ENCODE measurements at regions of chr11 and their contacts with region 1.

Region 1: GRCh38 chr11:94786264-94787126 is 18.3 kb downstream of the AMOTL1 start:
- DNase-seq: peak; percentile 75
- ATAC-seq: no peak
- H3K4me3 ChIP-seq: no peak overlapping the region
- H3K27ac ChIP-seq: peak overlapping the region; percentile 95
- H3K4me1 ChIP-seq: peaks cover 47% of the 10 kb centered on the region
- H3K27me3 ChIP-seq: no peaks in the 10 kb centered on the region
- CTCF ChIP-seq: peak; percentile 80

Region 2: GRCh38 chr11:94767761-94768601 is 18.5 kb before region 1 on chr11 and contains the start of gene AMOTL1:
- CTCF ChIA-PET with region 1: no interaction called
- POLR2A ChIA-PET with region 1: interaction called, 3 read pairs
- intact Hi-C with region 1: loop called (anchors 1 kb)
- DNase-seq: peak; percentile 96
- ATAC-seq: peak; percentile 78
- H3K4me3 ChIP-seq: peak within 1 kb of the TSS; percentile 94
- H3K27ac ChIP-seq: peak within 1 kb of the TSS; percentile 61
- H3K4me1 ChIP-seq: peaks cover 46% of the 10 kb centered on the region
- H3K27me3 ChIP-seq: no peaks in the 10 kb centered on the region
- CTCF ChIP-seq: peak; percentile 41
- total RNA-seq, gene AMOTL1: 32.6 and 37.9 TPM in 2 replicates

Region 3: GRCh38 chr11:94845622-94846021 is 59.1 kb after region 1 on chr11:
- CTCF ChIA-PET with region 1: interaction called, 4 read pairs
- POLR2A ChIA-PET with region 1: no interaction called
- intact Hi-C with region 1: loop called (anchors 1 kb)
- DNase-seq: peak; percentile 93
- ATAC-seq: peak; percentile 100
- H3K4me3 ChIP-seq: no peak overlapping the region
- H3K27ac ChIP-seq: 0 out of 2 replicates have a peak overlapping the region, but pooled peaks have one; percentile 3
- H3K4me1 ChIP-seq: peaks cover 16% of the 10 kb centered on the region
- H3K27me3 ChIP-seq: no peaks in the 10 kb centered on the region
- CTCF ChIP-seq: no peak

Region 4: GRCh38 chr11:94876645-94877442 is 90.3 kb after region 1 on chr11:
- CTCF ChIA-PET with region 1: no interaction called
- POLR2A ChIA-PET with region 1: no interaction called
- intact Hi-C with region 1: loop called (anchors 2 kb)
- DNase-seq: peak; percentile 84
- ATAC-seq: peak; percentile 79
- H3K4me3 ChIP-seq: no peak overlapping the region
- H3K27ac ChIP-seq: peak overlapping the region; percentile 22
- H3K4me1 ChIP-seq: peaks cover 44% of the 10 kb centered on the region
- H3K27me3 ChIP-seq: no peaks in the 10 kb centered on the region
- CTCF ChIP-seq: peak; percentile 58

Region 5: GRCh38 chr11:94885133-94885532 is 98.6 kb after region 1 on chr11:
- CTCF ChIA-PET with region 1: interaction called, 5 read pairs
- POLR2A ChIA-PET with region 1: interaction called, 13 read pairs
- intact Hi-C with region 1: loop called (anchors 2 kb)
- DNase-seq: peak; percentile 96
- ATAC-seq: peak; percentile 83
- H3K4me3 ChIP-seq: no peak overlapping the region
- H3K27ac ChIP-seq: peak overlapping the region; percentile 38
- H3K4me1 ChIP-seq: peaks cover 33% of the 10 kb centered on the region
- H3K27me3 ChIP-seq: no peaks in the 10 kb centered on the region
- CTCF ChIP-seq: no peak

Region 6: GRCh38 chr11:94897330-94897768 is 110.9 kb after region 1 on chr11:
- CTCF ChIA-PET with region 1: interaction called, 4 read pairs
- POLR2A ChIA-PET with region 1: no interaction called
- intact Hi-C with region 1: loop called (anchors 1 kb)
- DNase-seq: peak; percentile 78
- ATAC-seq: peak; percentile 73
- H3K4me3 ChIP-seq: no peak overlapping the region
- H3K27ac ChIP-seq: no peak overlapping the region
- H3K4me1 ChIP-seq: peaks cover 8% of the 10 kb centered on the region; the same call in 1 of the 2 replicates
- H3K27me3 ChIP-seq: no peaks in the 10 kb centered on the region
- CTCF ChIP-seq: peak; percentile 98

Region 7: GRCh38 chr11:94973099-94973968 is 186.8 kb after region 1 on chr11 and contains the starts of genes CWC15 and KDM4D:
- CTCF ChIA-PET with region 1: no interaction called
- POLR2A ChIA-PET with region 1: interaction called, 3 read pairs
- intact Hi-C with region 1: loop called (anchors 1 kb)
- DNase-seq: peak; percentile 98
- ATAC-seq: peak; percentile 99
- H3K4me3 ChIP-seq: peak within 1 kb of the TSS; percentile 83
- H3K27ac ChIP-seq: peak within 1 kb of the TSS; percentile 13; the same call in 1 of the 2 replicates
- H3K4me1 ChIP-seq: peaks cover 21% of the 10 kb centered on the region
- H3K27me3 ChIP-seq: no peaks in the 10 kb centered on the region
- CTCF ChIP-seq: no peak
- total RNA-seq, gene CWC15: 56.9 and 63.5 TPM in 2 replicates
- total RNA-seq, gene KDM4D: 2.7 and 4.1 TPM in 2 replicates

Region 8: GRCh38 chr11:95035316-95035715 is 248.8 kb after region 1 on chr11:
- CTCF ChIA-PET with region 1: no interaction called
- POLR2A ChIA-PET with region 1: no interaction called
- intact Hi-C with region 1: no loop called
- DNase-seq: no peak
- ATAC-seq: no peak
- H3K4me3 ChIP-seq: no peak overlapping the region
- H3K27ac ChIP-seq: no peak overlapping the region
- H3K4me1 ChIP-seq: no peaks in the 10 kb centered on the region
- H3K27me3 ChIP-seq: peaks cover 10% of the 10 kb centered on the region
- CTCF ChIP-seq: no peak

Measured in PC-3 (cell line).